Mammary epithelial cell (primary cell): ENCODE measurements at regions of chr7 and their contacts with region 1.

Region 1: DNA sequence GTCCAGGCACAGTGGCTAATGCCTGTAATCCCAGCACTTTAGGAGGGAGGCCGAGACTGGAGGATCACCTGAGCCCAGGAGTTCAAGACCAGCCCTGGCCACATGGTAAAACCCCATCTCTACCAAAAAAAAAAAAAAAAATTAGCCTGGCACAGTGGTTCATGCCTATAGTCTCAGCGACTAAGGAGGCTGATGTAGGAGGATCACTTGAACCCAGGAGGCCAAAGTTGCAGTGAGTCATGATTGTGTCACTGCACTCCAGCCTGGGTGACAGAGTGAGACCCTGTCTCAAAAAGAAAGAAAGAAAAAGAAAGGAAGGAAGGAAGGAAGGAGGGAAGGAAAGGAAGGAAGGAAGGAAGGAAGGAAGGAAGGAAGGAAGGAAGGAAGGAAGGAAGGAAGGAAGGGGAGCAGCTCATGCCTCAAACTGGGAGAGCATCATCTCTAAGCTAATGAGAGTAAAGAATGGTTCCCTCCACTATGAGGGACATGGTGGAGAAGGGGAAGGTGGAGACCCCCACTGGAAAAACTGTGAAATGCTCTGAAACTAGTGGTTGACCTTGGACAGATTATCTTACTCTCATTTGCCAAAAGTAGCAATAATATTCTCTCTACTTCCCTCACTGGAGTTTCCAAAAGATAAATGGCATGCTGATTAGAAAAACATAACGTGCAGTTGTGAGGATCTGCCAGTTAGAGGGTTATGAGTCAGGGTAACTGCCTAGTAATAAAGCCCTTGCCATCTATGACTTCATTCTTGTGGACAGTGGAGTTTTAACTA is 16.8 kb downstream of the GIMAP5 start:
- DNase-seq: peak; percentile 27
- H3K4me3 ChIP-seq: no peak overlapping the region
- H3K27ac ChIP-seq: no peak overlapping the region
- H3K4me1 ChIP-seq: no peaks in the 10 kb centered on the region
- H3K27me3 ChIP-seq: no peaks in the 10 kb centered on the region
- CTCF ChIP-seq: peak; percentile 14 to 36

Region 2: GRCh38 chr7:150404805-150405583 is 349.0 kb before region 1 on chr7:
- CTCF ChIA-PET with region 1: no interaction called
- dilution Hi-C with region 1: no loop called
- in situ Hi-C with region 1: no loop called
- intact Hi-C with region 1: no loop called
- DNase-seq: peak; percentile 70
- H3K4me3 ChIP-seq: peak overlapping the region; percentile 39 to 73 (median 54)
- H3K27ac ChIP-seq: no peak overlapping the region
- H3K4me1 ChIP-seq: peaks cover 12% of the 10 kb centered on the region
- H3K27me3 ChIP-seq: no peaks in the 10 kb centered on the region
- CTCF ChIP-seq: peak in 1 of 2 donors; percentile 33

Region 3: GRCh38 chr7:150685219-150686029 is 68.6 kb before region 1 on chr7 and contains the start of gene GIMAP2:
- CTCF ChIA-PET with region 1: no interaction called
- dilution Hi-C with region 1: no loop called
- in situ Hi-C with region 1: no loop called
- intact Hi-C with region 1: loop called (anchors 5 kb)
- DNase-seq: peak; percentile 43
- H3K4me3 ChIP-seq: peak within 1 kb of the TSS in 2 of 3 experiments; percentile 17 to 34
- H3K27ac ChIP-seq: no peak within 1 kb of the TSS
- H3K4me1 ChIP-seq: peaks cover 3% of the 10 kb centered on the region
- H3K27me3 ChIP-seq: no peaks in the 10 kb centered on the region
- CTCF ChIP-seq: no peak
- total RNA-seq, gene GIMAP2: 1.3 to 1.4 TPM

Region 4: DNA sequence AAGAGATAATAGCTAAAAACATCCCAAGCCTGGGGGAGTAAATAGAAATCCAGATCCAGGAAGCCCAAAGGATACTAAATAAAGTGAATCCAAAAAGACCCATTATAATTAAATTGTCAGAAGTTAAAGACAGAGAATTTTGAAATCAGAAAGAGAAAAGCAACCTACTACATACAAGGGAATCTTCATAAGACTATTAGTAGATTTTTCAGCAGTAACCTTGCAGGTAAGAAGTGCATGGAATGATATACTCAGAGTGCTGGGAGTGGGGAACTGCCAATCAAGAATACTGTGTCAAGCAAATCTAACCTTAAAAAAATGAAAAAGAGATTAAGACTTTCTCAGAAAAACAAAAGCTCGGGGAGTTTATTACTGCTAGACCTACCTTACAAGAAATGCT is 50.8 kb before region 1 on chr7:
- CTCF ChIA-PET with region 1: no interaction called
- dilution Hi-C with region 1: no loop called
- in situ Hi-C with region 1: no loop called
- intact Hi-C with region 1: no loop called
- DNase-seq: no peak
- H3K4me3 ChIP-seq: no peak overlapping the region
- H3K27ac ChIP-seq: no peak overlapping the region
- H3K4me1 ChIP-seq: no peaks in the 10 kb centered on the region
- H3K27me3 ChIP-seq: peaks cover 2% of the 10 kb centered on the region
- CTCF ChIP-seq: no peak